BJ (cell line): ENCODE measurements at regions of chr2 and their contacts with region 1.

Region 1: GRCh38 chr2:28594289-28595108 is 98.6 kb downstream of the PLB1 start:
- DNase-seq: peak; percentile 17
- H3K4me3 ChIP-seq: no peak overlapping the region
- H3K27me3 ChIP-seq: no peaks in the 10 kb centered on the region
- CTCF ChIP-seq: peak; percentile 80

Region 2: DNA sequence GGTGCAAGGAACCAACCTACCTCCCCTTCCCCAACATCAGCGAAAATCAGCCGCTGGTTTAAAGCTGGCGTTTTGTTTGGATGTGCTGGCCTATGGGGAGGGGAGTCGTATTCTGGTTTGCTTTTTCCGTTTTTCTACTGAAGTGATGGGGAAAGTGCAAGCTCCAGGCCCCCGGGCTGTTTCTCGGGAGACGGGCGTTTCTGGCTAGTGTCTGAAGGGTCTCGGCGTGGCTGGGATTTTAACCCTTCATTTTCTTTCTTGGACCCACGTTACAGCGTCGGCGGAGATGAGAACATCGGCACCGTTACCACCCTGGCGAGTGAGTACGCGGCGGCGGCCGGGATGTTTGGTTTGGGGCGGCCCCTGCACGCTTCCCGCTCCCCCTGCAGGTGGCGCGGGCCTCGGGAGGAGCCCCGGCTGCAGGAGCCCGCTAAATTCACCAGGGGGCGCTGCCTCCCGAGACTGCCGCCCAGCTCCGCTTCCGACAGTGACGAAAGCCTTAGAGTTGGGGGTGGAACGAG is 27.9 kb before region 1 on chr2:
- CTCF ChIA-PET with region 1: interaction called, 40 read pairs
- POLR2A ChIA-PET with region 1: no interaction called
- DNase-seq: peak; percentile 16
- H3K4me3 ChIP-seq: peak overlapping the region; percentile 54
- H3K27me3 ChIP-seq: no peaks in the 10 kb centered on the region
- CTCF ChIP-seq: peak; percentile 100

Region 3: GRCh38 chr2:28583899-28584553 is 10.5 kb before region 1 on chr2:
- CTCF ChIA-PET with region 1: interaction called, 14 read pairs
- POLR2A ChIA-PET with region 1: no interaction called
- DNase-seq: peak; percentile 82
- H3K4me3 ChIP-seq: no peak overlapping the region
- H3K27me3 ChIP-seq: no peaks in the 10 kb centered on the region
- CTCF ChIP-seq: no peak

Region 4: DNA sequence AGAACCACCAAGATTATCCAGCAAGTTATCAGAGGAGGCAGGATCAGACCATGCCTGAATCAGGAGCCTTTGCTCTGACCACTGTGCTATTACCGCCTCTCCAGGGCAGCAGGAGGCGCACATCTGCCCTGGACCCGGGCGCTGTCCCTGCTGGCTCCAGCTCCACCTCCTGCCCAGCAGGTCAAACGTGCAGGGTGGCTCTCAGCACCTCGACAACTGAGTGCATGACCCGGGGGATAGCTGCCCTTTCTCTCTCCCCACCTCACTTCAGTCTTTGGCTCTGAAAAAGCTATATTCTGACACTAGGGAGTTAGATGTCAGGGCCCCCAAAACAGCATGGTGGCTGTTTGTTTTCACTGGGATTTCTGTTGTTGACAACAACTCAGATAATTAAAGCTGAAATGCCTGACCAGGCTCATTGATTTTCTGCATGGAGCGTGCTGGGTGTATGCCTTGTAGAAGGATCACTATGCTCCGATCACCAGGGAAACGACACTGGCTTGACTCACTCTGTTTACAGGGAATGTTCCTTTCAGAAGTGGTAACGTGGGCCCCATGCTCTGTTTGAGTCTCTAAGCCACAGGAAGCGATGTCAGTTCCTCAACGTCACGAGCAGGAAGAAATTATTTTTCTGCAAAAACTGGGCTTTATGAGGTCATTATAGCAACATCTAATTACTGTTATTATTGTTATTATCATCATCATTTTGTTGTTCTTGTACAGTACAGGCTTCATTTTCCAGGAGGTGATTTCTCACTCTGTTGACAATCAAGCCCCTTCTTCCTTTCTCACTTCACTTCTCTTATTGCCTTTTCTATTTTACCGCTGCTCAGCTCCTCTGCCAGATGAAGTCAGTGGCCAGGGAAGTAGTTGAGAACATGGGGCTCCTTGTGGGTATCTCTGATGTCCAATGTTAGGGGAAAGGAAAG is 26.9 kb after region 1 on chr2:
- CTCF ChIA-PET with region 1: interaction called, 25 read pairs
- POLR2A ChIA-PET with region 1: interaction called, 14 read pairs
- DNase-seq: peak; percentile 81
- H3K4me3 ChIP-seq: no peak overlapping the region
- H3K27me3 ChIP-seq: no peaks in the 10 kb centered on the region
- CTCF ChIP-seq: peak; percentile 43

Region 5: DNA sequence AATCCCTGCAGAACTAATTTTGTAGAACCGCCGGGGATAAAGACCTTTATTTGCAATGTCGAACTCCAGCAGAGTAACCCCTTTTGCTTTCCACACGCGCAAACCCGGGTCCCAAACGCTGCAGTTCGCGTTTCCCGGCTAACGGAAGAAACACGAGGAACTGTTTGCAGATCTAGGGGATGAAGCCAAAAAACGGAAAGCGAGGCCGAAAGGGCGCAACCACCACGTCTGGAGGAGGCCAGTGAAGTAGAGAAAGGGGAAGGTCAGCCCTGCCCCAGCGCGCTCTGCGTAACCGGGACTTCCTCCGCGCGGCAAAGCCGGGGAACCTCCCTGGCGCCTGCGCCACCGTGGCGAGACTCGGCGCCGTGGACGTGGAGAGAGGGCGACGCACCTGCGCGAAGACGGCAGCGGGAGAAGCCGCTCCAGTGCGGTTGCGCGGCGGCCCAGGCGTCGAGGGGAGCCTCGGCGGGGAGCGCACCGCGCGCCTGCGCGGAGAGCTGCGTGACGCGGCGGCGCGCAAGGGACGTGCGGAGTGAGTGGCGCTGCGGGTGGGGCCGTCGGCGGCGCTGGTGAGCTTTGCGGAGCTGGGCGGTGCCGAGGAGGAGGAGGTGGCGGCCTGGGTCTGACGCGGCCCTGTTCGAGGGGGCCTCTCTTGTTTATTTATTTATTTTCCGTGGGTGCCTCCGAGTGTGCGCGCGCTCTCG is 156.9 kb after region 1 on chr2 and contains the start of gene PPP1CB:
- CTCF ChIA-PET with region 1: interaction called, 32 read pairs
- POLR2A ChIA-PET with region 1: no interaction called
- DNase-seq: peak; percentile 82
- H3K4me3 ChIP-seq: peak within 1 kb of the TSS; percentile 99
- H3K27me3 ChIP-seq: no peaks in the 10 kb centered on the region
- CTCF ChIP-seq: peak; percentile 27; the same call in 1 of the 2 replicates
- polyA plus RNA-seq, gene PPP1CB: 45.2 and 75.4 TPM in 2 replicates